Motor neuron (in vitro differentiated cells): ENCODE measurements at regions of chr17 and their contacts with region 1.

Region 1: GRCh38 chr17:40303009-40303657 is 5.8 kb upstream of the RARA start:
- ATAC-seq: peak; percentile 28 to 58 (median 46)
- H3K4me3 ChIP-seq: no peak overlapping the region
- H3K27ac ChIP-seq: no peak overlapping the region
- H3K4me1 ChIP-seq: peaks cover 33 to 39% of the 10 kb centered on the region in 2 donors

Region 2: GRCh38 chr17:40349920-40350909 is 47.1 kb after region 1 on chr17:
- in situ Hi-C with region 1: loop called in 5 of 9 experiments (anchors 5 to 10 kb)
- ATAC-seq: peak in 7 of 8 experiments; percentile 3 to 63 (median 57)
- H3K4me3 ChIP-seq: peak overlapping the region; percentile 11 to 25 (median 15)
- H3K27ac ChIP-seq: peak overlapping the region; percentile 93 to 99
- H3K4me1 ChIP-seq: peaks cover 79 to 81% of the 10 kb centered on the region in 2 donors

Region 3: DNA sequence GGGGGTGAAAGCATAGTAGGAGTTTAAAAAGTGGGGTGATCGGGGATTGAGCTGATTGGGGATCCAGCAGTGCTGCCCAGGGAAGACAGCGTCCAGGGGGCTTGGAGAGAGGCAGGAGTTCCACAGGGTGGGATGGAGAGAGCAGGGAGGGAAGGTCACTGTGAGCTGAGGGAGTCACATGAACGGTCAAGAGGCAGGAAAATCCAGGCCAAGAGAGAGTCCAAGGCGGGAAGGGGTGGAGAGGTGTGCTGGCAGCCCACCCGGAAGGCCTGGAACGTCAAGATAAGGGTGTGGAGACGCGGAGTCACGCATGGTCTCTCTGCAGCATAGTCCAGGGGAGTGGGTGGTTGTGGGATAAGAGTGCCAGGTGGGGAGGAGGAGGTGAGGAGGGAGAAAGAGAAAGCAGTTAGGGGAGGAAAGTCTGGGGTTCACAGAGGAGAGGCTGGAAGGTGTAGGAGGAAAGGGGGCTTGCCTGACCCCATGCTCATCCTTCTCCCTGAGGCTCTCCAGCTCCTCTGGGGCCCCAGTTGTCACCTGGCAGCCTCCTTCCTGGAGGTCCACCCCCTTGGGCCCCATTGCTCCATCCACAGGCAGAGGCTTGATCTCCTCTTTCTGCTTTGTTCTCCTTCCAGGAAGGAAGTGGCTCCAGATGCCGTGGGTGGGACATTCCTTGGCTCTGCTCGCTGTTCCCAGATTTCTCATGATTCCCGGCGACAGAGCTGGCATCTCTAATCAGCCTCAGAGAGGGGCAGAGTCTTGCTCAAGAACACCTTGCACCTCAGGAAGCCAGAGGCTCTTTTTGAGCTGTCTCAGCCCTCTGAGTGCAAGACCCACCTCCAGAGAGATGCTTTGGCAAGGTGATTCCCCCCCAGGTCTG is 233.4 kb after region 1 on chr17:
- in situ Hi-C with region 1: loop called in 2 of 9 experiments (anchors 10 kb)
- ATAC-seq: peak in 2 of 8 experiments; percentile 7 to 9
- H3K4me3 ChIP-seq: no peak overlapping the region
- H3K27ac ChIP-seq: no peak overlapping the region
- H3K4me1 ChIP-seq: peaks cover 7 to 13% of the 10 kb centered on the region in 2 donors